Endothelial cell of umbilical vein (primary cell): ENCODE measurements at regions of chr3 and their contacts with region 1.

Region 1: GRCh38 chr3:191066669-191067068 is 132.4 kb upstream of the OSTN start:
- DNase-seq: peak; percentile 29
- H3K4me3 ChIP-seq: no peak overlapping the region
- H3K27ac ChIP-seq: no peak overlapping the region
- H3K4me1 ChIP-seq: peaks cover 10% of the 10 kb centered on the region
- H3K27me3 ChIP-seq: no peaks in the 10 kb centered on the region
- CTCF ChIP-seq: no peak
- POLR2A ChIP-seq: no peak

Region 2: GRCh38 chr3:190902292-190902691 is 164.4 kb before region 1 on chr3:
- CTCF ChIA-PET with region 1: no interaction called
- POLR2A ChIA-PET with region 1: no interaction called
- dilution Hi-C with region 1: no loop called
- intact Hi-C with region 1: no loop called
- DNase-seq: no peak
- H3K4me3 ChIP-seq: no peak overlapping the region
- H3K27ac ChIP-seq: no peak overlapping the region
- H3K4me1 ChIP-seq: no peaks in the 10 kb centered on the region
- H3K27me3 ChIP-seq: no peaks in the 10 kb centered on the region
- CTCF ChIP-seq: no peak
- POLR2A ChIP-seq: no peak

Region 3: GRCh38 chr3:191425322-191425734 is 358.7 kb after region 1 on chr3:
- CTCF ChIA-PET with region 1: no interaction called
- POLR2A ChIA-PET with region 1: no interaction called
- dilution Hi-C with region 1: no loop called
- intact Hi-C with region 1: loop called (anchors 10 kb)
- DNase-seq: no peak
- H3K4me3 ChIP-seq: no peak overlapping the region
- H3K27ac ChIP-seq: no peak overlapping the region
- H3K4me1 ChIP-seq: no peaks in the 10 kb centered on the region
- H3K27me3 ChIP-seq: peaks cover 2 to 4% of the 10 kb centered on the region in 2 experiments
- CTCF ChIP-seq: no peak
- POLR2A ChIP-seq: no peak